Activated CD4-positive, alpha-beta T cell treated with anti-CD3 and anti-CD28 coated beads for 36 hours (primary cell): ENCODE measurements at regions of chr15 and their contacts with region 1.

Region 1: GRCh38 chr15:91022075-91022835 is at the start of gene VPS33B:
- DNase-seq: peak; percentile 84
- ATAC-seq: peak; percentile 81
- H3K4me3 Mint-ChIP-seq: peak within 1 kb of the TSS; percentile 89
- H3K27ac Mint-ChIP-seq: peak within 1 kb of the TSS; percentile 61
- H3K4me1 Mint-ChIP-seq: peaks cover 37% of the 10 kb centered on the region
- H3K27me3 Mint-ChIP-seq: no peaks in the 10 kb centered on the region
- total RNA-seq, gene VPS33B: 22.8 to 25.9 TPM

Region 2: GRCh38 chr15:90902040-90902839 is 120.0 kb before region 1 on chr15:
- CTCF ChIA-PET with region 1: interaction called, 3 read pairs
- POLR2A ChIA-PET with region 1: no interaction called
- intact Hi-C with region 1: loop called in 1 of 2 experiments (anchors 1 kb)
- DNase-seq: peak; percentile 83
- ATAC-seq: peak; percentile 79
- H3K4me3 Mint-ChIP-seq: peak overlapping the region; percentile 81
- H3K27ac Mint-ChIP-seq: peak overlapping the region; percentile 88
- H3K4me1 Mint-ChIP-seq: peaks cover 16% of the 10 kb centered on the region
- H3K27me3 Mint-ChIP-seq: no peaks in the 10 kb centered on the region

Region 3: GRCh38 chr15:90970274-90970673 is 52.0 kb before region 1 on chr15:
- CTCF ChIA-PET with region 1: no interaction called
- POLR2A ChIA-PET with region 1: no interaction called
- intact Hi-C with region 1: no loop called
- DNase-seq: no peak
- ATAC-seq: no peak
- H3K4me3 Mint-ChIP-seq: no peak overlapping the region
- H3K27ac Mint-ChIP-seq: no peak overlapping the region
- H3K4me1 Mint-ChIP-seq: no peaks in the 10 kb centered on the region
- H3K27me3 Mint-ChIP-seq: no peaks in the 10 kb centered on the region

Region 4: GRCh38 chr15:90994417-90995311 is 27.6 kb before region 1 on chr15 and contains the start of gene PRC1:
- CTCF ChIA-PET with region 1: interaction called, 3 read pairs
- POLR2A ChIA-PET with region 1: interaction called, 4 read pairs
- intact Hi-C with region 1: loop called (anchors 1 kb)
- DNase-seq: peak; percentile 99
- ATAC-seq: peak; percentile 99
- H3K4me3 Mint-ChIP-seq: peak within 1 kb of the TSS; percentile 99
- H3K27ac Mint-ChIP-seq: peak within 1 kb of the TSS; percentile 100
- H3K4me1 Mint-ChIP-seq: peaks cover 19% of the 10 kb centered on the region
- H3K27me3 Mint-ChIP-seq: no peaks in the 10 kb centered on the region
- total RNA-seq, gene PRC1: 111 to 157 TPM

Region 5: GRCh38 chr15:91032919-91033803 is 10.9 kb after region 1 on chr15:
- CTCF ChIA-PET with region 1: interaction called, 17 read pairs
- POLR2A ChIA-PET with region 1: interaction called, 3 read pairs
- intact Hi-C with region 1: no loop called
- DNase-seq: peak; percentile 82
- ATAC-seq: peak; percentile 91
- H3K4me3 Mint-ChIP-seq: no peak overlapping the region
- H3K27ac Mint-ChIP-seq: no peak overlapping the region
- H3K4me1 Mint-ChIP-seq: no peaks in the 10 kb centered on the region
- H3K27me3 Mint-ChIP-seq: peaks cover 2% of the 10 kb centered on the region